GM10248 (cell line): ENCODE measurements at regions of chr2 and their contacts with region 1.

Region 1: DNA sequence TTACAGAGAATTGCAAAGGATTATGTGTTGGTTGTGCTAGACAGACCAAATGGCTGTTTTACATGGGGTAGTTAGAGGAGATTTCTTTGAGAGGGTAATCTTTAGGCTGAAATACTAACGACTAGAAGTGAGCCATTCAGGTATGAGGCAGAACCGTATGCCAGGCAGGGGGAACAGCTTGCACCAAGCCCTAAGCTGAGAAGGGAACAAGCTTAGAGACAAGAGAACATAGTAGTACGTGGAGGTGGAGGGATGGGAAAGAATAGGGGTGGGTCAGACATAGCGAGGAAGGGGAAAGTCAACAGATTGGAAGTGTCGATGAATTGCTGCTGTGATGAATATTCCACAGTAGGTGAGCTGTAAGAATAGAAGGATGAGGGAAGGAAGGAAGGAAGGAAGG is 20.0 kb upstream of the CRIM1 start:
- DNase-seq: no peak
- CTCF ChIP-seq: no peak

Region 2: DNA sequence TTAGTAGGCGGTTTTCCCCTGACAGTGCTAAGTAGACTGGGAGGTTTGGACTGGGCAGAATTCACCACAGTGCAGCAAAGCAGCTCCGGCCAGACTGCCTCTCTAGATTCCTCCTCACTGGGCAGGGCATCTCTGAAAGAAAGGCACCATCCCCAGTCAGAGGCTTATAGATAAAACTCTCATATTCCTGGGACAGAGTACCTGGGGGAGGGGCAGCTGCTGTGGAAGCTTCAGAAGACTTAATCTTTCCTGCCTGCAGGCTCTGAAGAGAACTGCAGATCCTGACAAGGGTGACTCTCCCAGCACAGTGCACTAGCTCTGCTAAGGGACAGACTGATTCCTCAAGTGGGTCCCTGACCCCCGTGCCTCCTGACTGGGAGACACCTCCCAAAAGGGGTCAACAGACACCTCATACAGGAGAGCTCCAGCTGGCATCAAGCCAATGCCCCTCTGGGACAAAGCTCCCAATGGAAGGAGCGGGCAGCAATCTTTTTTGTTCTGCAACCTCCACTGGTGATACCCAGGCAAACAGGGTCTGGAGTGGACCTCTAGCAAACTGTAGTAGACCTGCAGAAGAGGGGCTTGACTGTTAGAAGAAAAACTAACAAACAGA is 246.8 kb before region 1 on chr2:
- CTCF ChIA-PET with region 1: no interaction called
- POLR2A ChIA-PET with region 1: no interaction called
- DNase-seq: no peak
- CTCF ChIP-seq: no peak

Region 3: DNA sequence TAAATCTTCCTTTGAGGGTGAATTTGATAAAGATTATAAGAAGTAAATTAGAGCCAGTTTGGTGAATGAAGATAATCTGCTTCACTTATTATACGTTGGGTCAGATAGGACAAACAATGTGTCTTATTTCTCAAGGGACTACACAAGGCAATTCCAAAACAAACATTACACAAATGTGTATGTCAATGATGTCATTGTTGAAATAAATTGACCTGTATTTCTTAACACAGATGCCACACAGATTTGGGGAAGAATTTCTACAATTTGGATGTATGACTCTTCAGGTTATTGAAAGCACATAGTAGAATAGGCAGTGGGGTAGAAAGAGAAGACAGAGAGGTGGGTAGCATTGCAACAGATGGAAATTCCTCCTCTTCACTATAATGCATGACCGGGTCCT is 13.1 kb after region 1 on chr2:
- CTCF ChIA-PET with region 1: interaction called, 17 read pairs
- POLR2A ChIA-PET with region 1: no interaction called
- DNase-seq: no peak
- CTCF ChIP-seq: no peak